ENCODE measurements at regions of chr3 and their contacts with region 1.

Region 1: GRCh38 chr3:142578327-142579223 is at the start of gene ATR:
- DNase-seq: peak; percentile 98
- ATAC-seq: peak; percentile 92
- H3K4me3 Mint-ChIP-seq: peak within 1 kb of the TSS; percentile 98
- H3K27ac Mint-ChIP-seq: peak within 1 kb of the TSS; percentile 97
- H3K4me1 Mint-ChIP-seq: peaks cover 37% of the 10 kb centered on the region
- H3K27me3 Mint-ChIP-seq: peaks cover 17% of the 10 kb centered on the region
- total RNA-seq, gene ATR: 33.6 to 35.8 TPM

Region 2: GRCh38 chr3:142337994-142338393 is 240.6 kb before region 1 on chr3:
- CTCF ChIA-PET with region 1: no interaction called
- POLR2A ChIA-PET with region 1: no interaction called
- DNase-seq: no peak
- ATAC-seq: no peak
- H3K4me3 Mint-ChIP-seq: no peak overlapping the region
- H3K27ac Mint-ChIP-seq: no peak overlapping the region
- H3K4me1 Mint-ChIP-seq: peaks cover 2% of the 10 kb centered on the region
- H3K27me3 Mint-ChIP-seq: no peaks in the 10 kb centered on the region

Region 3: GRCh38 chr3:142447852-142448823 is 130.4 kb before region 1 on chr3 and contains the start of gene XRN1:
- CTCF ChIA-PET with region 1: no interaction called
- POLR2A ChIA-PET with region 1: interaction called, 21 read pairs
- DNase-seq: peak; percentile 97
- ATAC-seq: peak; percentile 94
- H3K4me3 Mint-ChIP-seq: peak within 1 kb of the TSS; percentile 88
- H3K27ac Mint-ChIP-seq: peak within 1 kb of the TSS; percentile 96
- H3K4me1 Mint-ChIP-seq: peaks cover 26% of the 10 kb centered on the region
- H3K27me3 Mint-ChIP-seq: no peaks in the 10 kb centered on the region
- total RNA-seq, gene XRN1: 58.0 to 59.6 TPM

Region 4: GRCh38 chr3:142595951-142596725 is 17.6 kb after region 1 on chr3 and contains the start of gene PLS1:
- CTCF ChIA-PET with region 1: interaction called, 3 read pairs
- POLR2A ChIA-PET with region 1: interaction called, 18 read pairs
- DNase-seq: peak; percentile 83
- ATAC-seq: peak; percentile 95
- H3K4me3 Mint-ChIP-seq: peak within 1 kb of the TSS; percentile 92
- H3K27ac Mint-ChIP-seq: peak within 1 kb of the TSS; percentile 82
- H3K4me1 Mint-ChIP-seq: peaks cover 18% of the 10 kb centered on the region
- H3K27me3 Mint-ChIP-seq: peaks cover 7% of the 10 kb centered on the region
- total RNA-seq, gene PLS1: 2.3 to 3.2 TPM

Region 5: DNA sequence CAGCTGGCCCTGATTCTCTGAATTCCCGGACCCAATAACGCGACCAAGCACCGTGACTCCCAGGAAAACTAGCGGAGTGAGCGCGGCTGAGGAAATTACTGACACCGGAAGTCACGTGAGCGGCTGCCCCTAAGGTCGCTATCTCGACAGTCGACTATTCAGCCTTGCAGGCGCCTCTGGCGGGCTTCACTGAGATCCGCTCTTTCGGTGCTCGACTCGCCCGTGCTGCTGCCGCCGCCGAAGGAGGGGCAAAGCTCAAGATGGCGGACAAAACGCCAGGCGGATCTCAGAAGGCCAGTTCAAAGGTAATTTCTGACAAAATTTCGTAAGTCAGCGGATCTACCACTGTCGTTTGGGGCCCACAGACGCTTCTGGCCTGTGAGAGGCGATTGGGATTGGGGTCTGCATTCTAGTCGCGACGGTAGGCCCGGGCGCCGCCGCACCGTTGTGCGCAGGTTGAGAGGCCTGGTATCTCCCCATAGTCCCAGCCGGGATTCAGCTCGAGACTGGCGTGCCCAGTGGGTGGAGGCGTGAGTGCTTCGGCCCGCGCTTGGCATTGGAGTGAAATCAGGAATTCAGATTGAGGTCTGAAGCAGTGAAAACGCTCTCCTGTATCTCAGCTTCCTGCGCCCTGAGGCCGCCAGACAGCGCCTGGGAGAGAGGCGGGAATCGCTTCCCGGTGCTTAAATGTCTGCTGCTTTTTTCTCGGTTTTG is 423.0 kb after region 1 on chr3 and contains the start of gene U2SURP:
- CTCF ChIA-PET with region 1: no interaction called
- POLR2A ChIA-PET with region 1: interaction called, 20 read pairs
- DNase-seq: peak; percentile 96
- ATAC-seq: peak; percentile 86
- H3K4me3 Mint-ChIP-seq: peak within 1 kb of the TSS; percentile 98
- H3K27ac Mint-ChIP-seq: peak within 1 kb of the TSS; percentile 100
- H3K4me1 Mint-ChIP-seq: peaks cover 35% of the 10 kb centered on the region
- H3K27me3 Mint-ChIP-seq: no peaks in the 10 kb centered on the region
- total RNA-seq, gene U2SURP: 123 to 124 TPM

Measured in activated CD8-positive, alpha-beta T cell treated with anti-CD3 and anti-CD28 coated beads, Interleukin-2, amount 10 ng/mL, durations not matched to agents 7 days and 5 days (primary cell).